Activated B cell treated with CpG ODN at 0.5 μM for 24 hours (primary cell): ENCODE measurements at regions of chr10 and their contacts with region 1.

Region 1: DNA sequence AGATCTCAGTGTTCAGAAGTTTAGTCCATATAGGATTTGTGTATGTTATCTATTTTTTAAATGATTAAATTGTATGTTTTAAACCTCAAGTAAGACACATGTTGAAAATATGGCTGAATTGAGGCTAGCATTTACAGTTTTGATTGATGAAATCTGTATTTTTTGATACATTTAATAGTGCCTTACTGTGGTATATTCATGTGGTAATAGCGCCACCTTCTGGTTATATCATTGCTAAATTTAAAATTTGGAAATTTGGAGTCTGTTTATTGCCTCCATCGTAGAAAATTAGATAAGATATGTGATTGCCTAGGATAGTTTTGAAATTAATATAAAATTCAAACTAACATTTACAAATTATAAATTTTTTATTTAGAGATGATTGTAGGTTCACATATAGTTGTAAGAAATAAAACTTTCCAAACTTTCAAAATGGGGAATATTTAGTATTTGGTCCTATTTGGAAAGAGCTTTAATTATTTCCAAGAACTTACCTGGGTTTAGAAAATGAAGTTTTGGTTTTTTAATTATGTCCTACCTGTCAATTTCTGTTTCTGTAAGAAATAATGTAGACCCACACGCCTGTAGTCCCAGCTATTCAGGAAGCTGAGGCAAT is 19.1 kb upstream of the ARMS2 start:
- DNase-seq: no peak
- ATAC-seq: no peak
- H3K4me3 Mint-ChIP-seq: no peak overlapping the region
- H3K27ac Mint-ChIP-seq: no peak overlapping the region
- H3K4me1 Mint-ChIP-seq: peaks cover 4% of the 10 kb centered on the region
- H3K27me3 Mint-ChIP-seq: no peaks in the 10 kb centered on the region
- CTCF ChIP-seq: peak; percentile 76

Region 2: GRCh38 chr10:120942806-120943413 is 1492.4 kb before region 1 on chr10:
- CTCF ChIA-PET with region 1: no interaction called
- POLR2A ChIA-PET with region 1: no interaction called
- intact Hi-C with region 1: loop called (anchors 10 kb)
- DNase-seq: peak; percentile 61
- ATAC-seq: peak; percentile 87
- H3K4me3 Mint-ChIP-seq: peak overlapping the region; percentile 8
- H3K27ac Mint-ChIP-seq: no peak overlapping the region
- H3K4me1 Mint-ChIP-seq: peaks cover 6% of the 10 kb centered on the region
- H3K27me3 Mint-ChIP-seq: peaks cover 21% of the 10 kb centered on the region
- CTCF ChIP-seq: no peak

Region 3: GRCh38 chr10:122142641-122143237 is 292.6 kb before region 1 on chr10:
- CTCF ChIA-PET with region 1: no interaction called
- POLR2A ChIA-PET with region 1: no interaction called
- intact Hi-C with region 1: loop called (anchors 2 kb)
- DNase-seq: peak; percentile 26
- ATAC-seq: no peak
- H3K4me3 Mint-ChIP-seq: no peak overlapping the region
- H3K27ac Mint-ChIP-seq: no peak overlapping the region
- H3K4me1 Mint-ChIP-seq: no peaks in the 10 kb centered on the region
- H3K27me3 Mint-ChIP-seq: peaks cover 8% of the 10 kb centered on the region
- CTCF ChIP-seq: no peak

Region 4: DNA sequence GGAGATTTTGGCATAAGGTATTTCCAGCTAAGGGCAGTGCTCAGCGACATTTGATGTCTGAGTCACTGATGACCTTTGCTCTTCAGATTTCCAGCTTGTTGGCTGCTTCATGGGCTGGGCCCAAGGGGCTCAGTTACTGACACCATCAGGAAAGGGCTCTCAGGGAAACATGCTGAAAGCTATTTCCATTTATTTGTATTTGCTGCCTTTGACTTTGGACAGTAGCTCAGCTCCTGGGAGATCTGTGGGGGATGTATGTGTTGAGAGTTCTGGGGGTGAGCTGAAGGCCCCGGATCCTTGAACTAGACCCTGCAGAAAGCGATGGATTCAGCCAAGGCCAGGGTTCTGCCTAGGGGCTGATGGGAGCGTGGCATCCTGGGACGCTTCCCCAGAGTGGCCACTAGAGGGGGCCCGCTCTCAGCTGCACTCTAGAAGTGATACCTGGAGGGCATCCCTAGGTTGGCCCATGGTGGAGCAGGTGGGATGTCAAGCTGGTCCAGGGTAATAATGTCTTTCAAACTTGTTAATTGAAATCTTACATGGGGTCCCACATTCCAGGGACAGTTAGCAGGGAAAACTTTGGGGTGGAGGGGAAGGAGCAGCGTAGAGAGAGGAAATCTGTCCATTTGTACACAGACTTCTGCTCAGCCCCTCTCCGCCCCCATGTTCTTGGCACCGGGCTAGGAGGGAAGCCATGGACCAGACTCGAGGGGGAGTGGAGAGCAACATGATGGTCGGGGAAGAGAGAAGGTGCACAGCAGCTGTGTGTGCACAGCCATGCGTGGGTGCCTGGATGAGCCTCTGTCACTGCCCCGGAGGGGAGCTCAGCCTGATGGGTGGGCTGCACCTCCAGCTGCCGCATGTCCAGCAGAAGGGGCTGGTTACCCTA is 167.2 kb before region 1 on chr10:
- CTCF ChIA-PET with region 1: interaction called, 15 read pairs
- POLR2A ChIA-PET with region 1: no interaction called
- intact Hi-C with region 1: loop called (anchors 1 kb)
- DNase-seq: peak; percentile 24
- ATAC-seq: peak; percentile 60
- H3K4me3 Mint-ChIP-seq: no peak overlapping the region
- H3K27ac Mint-ChIP-seq: no peak overlapping the region
- H3K4me1 Mint-ChIP-seq: no peaks in the 10 kb centered on the region
- H3K27me3 Mint-ChIP-seq: peaks cover 12% of the 10 kb centered on the region
- CTCF ChIP-seq: peak; percentile 18

Region 5: DNA sequence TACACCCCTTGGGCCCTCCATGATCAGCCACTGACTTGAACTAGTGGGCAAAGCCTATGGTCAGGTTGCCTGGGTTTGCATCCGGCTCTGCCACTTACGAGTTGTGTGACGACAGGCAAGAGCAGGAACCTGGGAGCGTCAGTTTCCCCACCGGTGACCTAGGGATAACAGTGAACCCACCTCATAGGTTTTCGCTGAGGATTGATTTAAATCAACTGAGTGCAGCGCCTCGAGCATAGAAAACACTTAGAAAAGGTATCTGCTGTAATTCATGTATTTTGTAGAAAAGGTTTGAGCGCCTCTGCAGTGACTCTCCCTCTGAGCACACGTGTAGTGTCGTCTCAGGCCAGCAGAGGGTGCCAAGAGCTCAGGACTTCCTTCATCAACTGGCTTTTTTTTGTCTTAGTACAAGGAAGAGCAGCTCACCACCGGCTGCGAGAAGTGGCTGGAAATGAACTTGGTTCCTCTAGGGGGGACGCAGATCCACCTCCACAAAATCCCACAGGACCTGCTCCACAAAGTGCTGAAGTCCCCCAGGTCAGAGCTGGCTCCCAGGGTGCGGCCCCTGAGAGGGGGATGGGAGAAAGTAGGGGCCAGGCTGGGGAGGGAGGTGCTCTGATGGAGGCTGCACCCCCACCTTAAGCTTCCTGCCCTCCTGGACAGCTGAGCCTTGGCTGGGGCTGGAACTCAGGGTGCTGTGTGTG is 136.6 kb before region 1 on chr10:
- CTCF ChIA-PET with region 1: interaction called, 89 read pairs
- POLR2A ChIA-PET with region 1: interaction called, 5 read pairs
- intact Hi-C with region 1: loop called (anchors 1 kb)
- DNase-seq: peak; percentile 48
- ATAC-seq: peak; percentile 89
- H3K4me3 Mint-ChIP-seq: no peak overlapping the region
- H3K27ac Mint-ChIP-seq: no peak overlapping the region
- H3K4me1 Mint-ChIP-seq: peaks cover 2% of the 10 kb centered on the region
- H3K27me3 Mint-ChIP-seq: peaks cover 13% of the 10 kb centered on the region
- CTCF ChIP-seq: no peak

Region 6: DNA sequence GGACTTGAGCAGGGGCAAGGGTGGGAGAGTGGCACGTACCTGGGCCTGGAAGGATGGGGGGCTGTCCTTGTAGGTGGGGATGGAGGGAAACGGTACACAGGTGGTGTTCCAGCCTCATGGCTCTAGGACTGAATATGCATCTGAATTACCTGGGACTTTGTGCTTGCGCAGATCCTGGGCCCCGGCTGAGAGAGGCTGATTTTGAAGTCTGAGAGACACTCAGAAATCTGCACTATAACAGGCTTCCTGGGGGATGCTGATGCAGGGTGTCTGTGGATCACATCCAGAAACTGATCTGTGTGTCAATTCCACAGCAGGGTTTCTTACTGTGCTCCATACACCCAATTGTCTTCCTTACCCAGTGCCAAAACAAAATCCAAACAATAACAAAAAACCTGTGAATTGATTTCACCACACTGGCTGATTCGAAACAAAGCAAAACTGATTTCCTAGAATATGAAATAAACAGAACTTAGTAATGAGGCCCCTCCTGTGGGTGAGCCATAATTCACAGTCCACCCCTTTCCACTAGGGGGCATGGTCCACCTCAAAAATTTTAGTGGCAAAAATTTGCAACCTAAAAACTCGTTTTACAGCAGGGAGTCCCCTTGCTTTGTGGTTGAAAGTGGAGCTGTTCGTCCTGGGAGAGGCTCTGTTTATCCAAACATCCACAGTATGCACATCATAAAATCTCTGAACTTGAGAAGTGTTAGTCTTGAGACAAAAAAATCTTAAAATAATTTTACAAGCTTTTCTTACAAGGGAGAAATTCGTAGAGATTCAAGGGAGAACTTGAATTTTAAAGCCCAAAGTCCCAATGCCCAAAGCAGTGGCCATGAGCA is 92.8 kb before region 1 on chr10:
- CTCF ChIA-PET with region 1: interaction called, 64 read pairs
- POLR2A ChIA-PET with region 1: no interaction called
- intact Hi-C with region 1: loop called (anchors 1 kb)
- DNase-seq: no peak
- ATAC-seq: peak; percentile 65
- H3K4me3 Mint-ChIP-seq: no peak overlapping the region
- H3K27ac Mint-ChIP-seq: no peak overlapping the region
- H3K4me1 Mint-ChIP-seq: peaks cover 16% of the 10 kb centered on the region
- H3K27me3 Mint-ChIP-seq: peaks cover 13% of the 10 kb centered on the region
- CTCF ChIP-seq: no peak

Region 7: GRCh38 chr10:122565728-122566206 is 130.4 kb after region 1 on chr10:
- CTCF ChIA-PET with region 1: interaction called, 7 read pairs
- POLR2A ChIA-PET with region 1: no interaction called
- intact Hi-C with region 1: loop called (anchors 5 kb)
- DNase-seq: no peak
- ATAC-seq: no peak
- H3K4me3 Mint-ChIP-seq: no peak overlapping the region
- H3K27ac Mint-ChIP-seq: no peak overlapping the region
- H3K4me1 Mint-ChIP-seq: no peaks in the 10 kb centered on the region
- H3K27me3 Mint-ChIP-seq: peaks cover 42% of the 10 kb centered on the region
- CTCF ChIP-seq: no peak